ENCODE measurements at regions of chr16 and their contacts with region 1.

Region 1: DNA sequence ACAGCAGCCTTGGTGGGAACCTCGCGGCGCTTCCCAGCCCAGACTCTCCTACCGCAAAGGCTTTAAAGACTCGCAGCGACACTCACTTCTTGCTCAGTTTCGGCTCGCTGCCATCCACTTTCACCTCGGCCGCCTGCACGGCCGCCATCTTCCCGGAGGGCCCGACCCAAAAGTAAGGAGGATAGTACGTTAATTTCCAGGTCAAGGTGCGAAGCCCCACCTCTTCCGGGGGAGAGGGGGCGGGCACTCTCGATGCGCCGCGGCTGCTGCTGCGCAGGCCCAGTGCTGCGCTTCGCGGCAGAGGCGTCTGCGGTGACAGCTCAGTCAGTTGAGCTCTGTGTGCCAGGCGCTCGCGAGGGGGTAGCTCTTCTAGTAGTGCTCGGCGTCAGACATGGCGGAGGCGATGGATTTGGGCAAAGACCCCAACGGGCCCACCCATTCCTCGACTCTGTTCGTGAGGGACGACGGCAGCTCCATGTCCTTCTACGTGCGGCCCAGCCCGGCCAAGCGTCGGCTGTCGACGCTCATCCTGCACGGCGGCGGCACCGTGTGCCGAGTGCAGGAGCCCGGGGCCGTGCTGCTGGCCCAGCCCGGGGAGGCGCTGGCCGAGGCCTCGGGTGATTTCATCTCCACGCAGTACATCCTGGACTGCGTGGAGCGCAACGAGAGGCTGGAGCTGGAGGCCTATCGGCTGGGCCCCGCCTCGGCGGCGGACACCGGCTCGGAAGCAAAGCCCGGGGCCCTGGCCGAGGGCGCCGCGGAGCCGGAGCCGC is at the starts of genes KARS1 and TERF2IP:
- DNase-seq: peak; percentile 89 to 96 (median 94)
- ATAC-seq: peak; percentile 85
- H3K4me3 Mint-ChIP-seq: peak within 1 kb of the TSS; percentile 93 to 100 (median 98)
- H3K27ac Mint-ChIP-seq: peak within 1 kb of the TSS; percentile 97 to 99 (median 99)
- H3K4me1 Mint-ChIP-seq: peaks cover 29 to 72% (median 65%) of the 10 kb centered on the region in 4 donors
- H3K27me3 Mint-ChIP-seq: peaks cover 0 to 1% (median 0%) of the 10 kb centered on the region in 5 donors
- polyA plus RNA-seq, gene KARS1: 194 to 214 (median 209) TPM
- polyA plus RNA-seq, gene TERF2IP: 96.4 to 137 (median 125) TPM

Region 2: GRCh38 chr16:75519881-75520280 is 127.8 kb before region 1 on chr16:
- POLR2A ChIA-PET with region 1: interaction called, 21 read pairs
- DNase-seq: no peak
- ATAC-seq: no peak
- H3K4me3 Mint-ChIP-seq: no peak overlapping the region
- H3K27ac Mint-ChIP-seq: no peak overlapping the region
- H3K4me1 Mint-ChIP-seq: peaks cover 8 to 14% (median 12%) of the 10 kb centered on the region in 4 donors
- H3K27me3 Mint-ChIP-seq: no peaks in the 10 kb centered on the region

Region 3: DNA sequence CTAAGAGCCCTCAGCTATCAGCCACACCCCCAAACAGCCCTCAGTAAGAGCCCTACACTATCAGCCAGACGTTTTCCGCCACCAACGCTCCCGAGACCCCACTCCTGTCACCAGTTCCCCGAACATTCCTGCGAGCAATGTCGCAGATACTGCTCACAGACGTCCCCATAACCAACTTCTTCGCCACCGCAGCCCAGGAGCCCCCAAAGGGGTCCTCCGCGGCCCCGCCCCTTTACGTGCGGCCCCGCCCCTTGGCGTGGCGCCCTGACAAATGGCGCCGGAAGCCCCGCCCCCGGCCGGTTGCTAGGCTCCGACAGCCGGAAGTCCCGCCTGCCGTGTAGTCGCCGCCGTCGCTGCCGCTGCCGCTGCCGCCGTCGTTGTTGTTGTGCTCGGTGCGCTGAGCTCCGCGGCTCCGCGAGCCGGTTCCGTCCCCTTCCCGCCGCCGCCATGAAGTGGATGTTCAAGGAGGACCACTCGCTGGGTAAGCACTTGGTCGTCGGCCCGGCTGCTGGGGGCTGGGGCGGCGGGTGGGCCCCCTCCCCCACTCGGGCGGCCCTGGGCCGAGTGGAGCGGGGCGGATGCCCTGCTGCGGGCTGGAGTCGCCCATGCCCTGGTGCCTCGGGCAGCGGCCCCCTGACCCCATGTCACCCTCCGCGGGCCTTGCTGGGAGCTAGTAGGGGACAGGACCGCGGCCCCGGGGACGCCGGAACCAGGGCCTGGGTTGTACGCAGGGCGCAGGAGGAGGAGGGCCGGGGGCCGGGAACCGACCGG is 81.5 kb before region 1 on chr16 and contains the start of gene GABARAPL2:
- POLR2A ChIA-PET with region 1: interaction called, 58 read pairs
- DNase-seq: peak; percentile 84 to 98 (median 94)
- ATAC-seq: peak; percentile 79
- H3K4me3 Mint-ChIP-seq: peak within 1 kb of the TSS; percentile 91 to 99 (median 98)
- H3K27ac Mint-ChIP-seq: peak within 1 kb of the TSS; percentile 92 to 99 (median 97)
- H3K4me1 Mint-ChIP-seq: peaks cover 8 to 52% (median 45%) of the 10 kb centered on the region in 4 donors
- H3K27me3 Mint-ChIP-seq: peaks cover 3 to 19% (median 9%) of the 10 kb centered on the region in 5 donors
- polyA plus RNA-seq, gene GABARAPL2: 226 to 291 (median 250) TPM

Region 4: DNA sequence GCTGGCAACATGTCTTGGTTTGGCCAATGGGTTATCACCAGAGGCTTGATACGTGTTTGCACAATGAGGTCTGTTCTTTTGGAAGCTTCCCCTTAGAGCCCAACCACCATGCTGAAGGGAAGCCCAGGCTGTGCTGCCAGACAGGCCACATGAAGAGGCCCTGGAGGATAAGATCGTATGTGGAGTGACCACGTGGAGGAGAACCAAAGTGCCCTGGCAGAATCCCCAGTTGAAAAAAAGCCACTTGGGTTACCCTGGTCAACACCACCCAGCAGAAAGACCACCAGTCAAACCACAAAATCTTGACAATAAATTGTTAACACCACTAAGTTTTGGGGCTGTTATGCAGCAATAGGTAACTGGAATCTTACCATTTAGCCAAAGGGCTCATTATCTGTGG is 17.6 kb before region 1 on chr16:
- POLR2A ChIA-PET with region 1: interaction called, 11 read pairs
- DNase-seq: no peak
- ATAC-seq: no peak
- H3K4me3 Mint-ChIP-seq: no peak overlapping the region
- H3K27ac Mint-ChIP-seq: peak overlapping the region in 2 of 10 donors; percentile 8 to 60
- H3K4me1 Mint-ChIP-seq: peaks cover 20 to 32% (median 27%) of the 10 kb centered on the region in 4 donors
- H3K27me3 Mint-ChIP-seq: no peaks in the 10 kb centered on the region

Region 5: DNA sequence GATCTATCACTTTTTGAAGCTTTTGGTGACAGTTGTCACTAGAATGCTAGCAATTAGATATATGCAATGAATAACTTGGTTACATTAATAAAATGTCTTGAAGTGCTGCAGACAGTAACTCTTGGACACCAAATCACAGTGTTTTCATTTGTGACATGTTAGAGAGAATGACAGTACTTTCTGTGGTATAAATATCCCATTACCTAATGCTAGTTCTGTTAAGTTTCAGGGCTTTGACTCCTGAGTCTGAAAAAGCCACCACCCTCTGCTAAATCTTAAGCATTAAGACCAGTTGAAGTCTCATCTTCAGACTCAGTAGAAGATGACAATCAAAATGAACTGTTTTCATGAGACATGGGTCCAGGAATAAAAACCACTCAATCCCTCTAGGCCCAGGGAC is 39.7 kb after region 1 on chr16:
- POLR2A ChIA-PET with region 1: no interaction called
- DNase-seq: no peak
- ATAC-seq: no peak
- H3K4me3 Mint-ChIP-seq: no peak overlapping the region
- H3K27ac Mint-ChIP-seq: peak overlapping the region in 1 of 10 donors; percentile 15
- H3K4me1 Mint-ChIP-seq: no peaks in the 10 kb centered on the region
- H3K27me3 Mint-ChIP-seq: peaks cover 0 to 7% (median 0%) of the 10 kb centered on the region in 5 donors

Region 6: GRCh38 chr16:75789237-75789636 is 141.6 kb after region 1 on chr16:
- POLR2A ChIA-PET with region 1: no interaction called
- DNase-seq: peak in 4 of 10 donors; percentile 5 to 48 (median 40)
- ATAC-seq: peak in 1 of 2 donors; percentile 48
- H3K4me3 Mint-ChIP-seq: no peak overlapping the region
- H3K27ac Mint-ChIP-seq: no peak overlapping the region
- H3K4me1 Mint-ChIP-seq: no peaks in the 10 kb centered on the region
- H3K27me3 Mint-ChIP-seq: peaks cover 14 to 49% (median 29%) of the 10 kb centered on the region in 5 donors